ENCODE measurements at regions of chr7 and their contacts with region 1.

Region 1: GRCh38 chr7:36487756-36488336 is 98.2 kb downstream of the ANLN start:
- DNase-seq: peak in 3 of 5 donors; percentile 16 to 59 (median 53)
- H3K4me3 ChIP-seq: no peak overlapping the region
- H3K4me3 Mint-ChIP-seq: no peak overlapping the region
- H3K27ac ChIP-seq: no peak overlapping the region
- H3K27ac Mint-ChIP-seq: no peak overlapping the region
- H3K4me1 ChIP-seq: no peaks in the 10 kb centered on the region
- H3K4me1 Mint-ChIP-seq: peaks cover 0 to 4% (median 2%) of the 10 kb centered on the region in 3 donors
- H3K27me3 ChIP-seq: no peaks in the 10 kb centered on the region
- H3K27me3 Mint-ChIP-seq: peaks cover 0 to 3% of the 10 kb centered on the region in 2 donors

Region 2: GRCh38 chr7:36521911-36522310 is 34.1 kb after region 1 on chr7:
- CTCF ChIA-PET with region 1: no interaction called
- POLR2A ChIA-PET with region 1: no interaction called
- DNase-seq: no peak
- H3K4me3 ChIP-seq: no peak overlapping the region
- H3K4me3 Mint-ChIP-seq: no peak overlapping the region
- H3K27ac ChIP-seq: no peak overlapping the region
- H3K27ac Mint-ChIP-seq: peak overlapping the region in 2 of 8 donors; percentile 7 to 91
- H3K4me1 ChIP-seq: no peaks in the 10 kb centered on the region
- H3K4me1 Mint-ChIP-seq: peaks cover 8 to 14% (median 11%) of the 10 kb centered on the region in 3 donors
- H3K27me3 ChIP-seq: no peaks in the 10 kb centered on the region
- H3K27me3 Mint-ChIP-seq: no peaks in the 10 kb centered on the region

Region 3: DNA sequence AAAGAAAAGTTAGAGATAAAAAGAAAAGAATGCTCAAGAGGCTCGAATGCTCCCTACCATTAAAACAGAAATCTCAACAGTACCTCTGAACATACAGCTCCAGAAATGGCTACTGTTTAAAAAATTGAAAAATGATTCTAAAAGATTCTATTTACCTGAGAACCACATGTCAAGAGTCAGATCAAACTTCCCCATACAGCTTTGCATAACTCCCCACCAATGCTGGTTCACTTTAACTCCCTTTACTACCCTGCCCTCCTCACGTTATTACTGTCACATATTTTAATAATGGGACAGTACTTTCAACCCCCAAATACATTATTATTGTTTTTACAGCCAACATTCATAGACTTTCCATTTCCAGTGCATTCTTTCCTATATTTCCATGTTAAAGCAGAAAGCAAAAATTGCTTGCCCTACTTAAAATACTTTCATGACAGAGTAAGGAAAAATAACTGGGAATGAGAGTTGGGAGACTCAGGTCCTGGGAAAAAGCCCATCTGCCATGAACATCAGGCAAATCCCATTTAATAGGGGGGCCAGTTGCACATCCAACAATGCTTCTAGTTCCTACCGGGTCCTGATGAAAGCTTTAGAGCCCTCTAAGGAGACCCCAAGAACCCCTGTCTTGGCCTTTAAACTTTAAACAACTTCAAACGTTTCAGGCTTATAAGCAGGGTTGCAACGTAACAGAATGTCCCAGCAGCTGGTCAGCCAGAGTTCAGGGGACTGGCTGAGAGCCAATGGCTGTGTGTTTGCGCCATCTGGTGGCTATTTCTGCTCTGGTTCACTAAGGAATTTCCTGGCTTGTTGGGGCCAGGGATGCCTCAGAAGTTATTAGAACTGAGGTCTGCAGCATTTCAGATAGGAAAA is 713.4 kb after region 1 on chr7:
- CTCF ChIA-PET with region 1: interaction called, 87 read pairs
- POLR2A ChIA-PET with region 1: no interaction called
- DNase-seq: peak; percentile 13 to 54 (median 18)
- H3K4me3 ChIP-seq: no peak overlapping the region
- H3K4me3 Mint-ChIP-seq: no peak overlapping the region
- H3K27ac ChIP-seq: no peak overlapping the region
- H3K27ac Mint-ChIP-seq: peak overlapping the region in 5 of 8 donors; percentile 6 to 93 (median 30)
- H3K4me1 ChIP-seq: no peaks in the 10 kb centered on the region
- H3K4me1 Mint-ChIP-seq: peaks cover 5 to 10% (median 7%) of the 10 kb centered on the region in 3 donors
- H3K27me3 ChIP-seq: no peaks in the 10 kb centered on the region
- H3K27me3 Mint-ChIP-seq: no peaks in the 10 kb centered on the region

Measured in CD8-positive, alpha-beta memory T cell (primary cell).